ENCODE measurements at regions of chr5 and their contacts with region 1.

Region 1: GRCh38 chr5:57221049-57221568 is 47.2 kb downstream of the GPBP1 start:
- DNase-seq: peak; percentile 46 to 65 (median 52)
- H3K4me3 ChIP-seq: no peak overlapping the region
- H3K4me3 Mint-ChIP-seq: no peak overlapping the region
- H3K27ac ChIP-seq: no peak overlapping the region
- H3K27ac Mint-ChIP-seq: no peak overlapping the region
- H3K4me1 ChIP-seq: no peaks in the 10 kb centered on the region
- H3K4me1 Mint-ChIP-seq: peaks cover 1% of the 10 kb centered on the region
- H3K27me3 ChIP-seq: no peaks in the 10 kb centered on the region
- H3K27me3 Mint-ChIP-seq: no peaks in the 10 kb centered on the region
- CTCF ChIP-seq: peak; percentile 95

Region 2: DNA sequence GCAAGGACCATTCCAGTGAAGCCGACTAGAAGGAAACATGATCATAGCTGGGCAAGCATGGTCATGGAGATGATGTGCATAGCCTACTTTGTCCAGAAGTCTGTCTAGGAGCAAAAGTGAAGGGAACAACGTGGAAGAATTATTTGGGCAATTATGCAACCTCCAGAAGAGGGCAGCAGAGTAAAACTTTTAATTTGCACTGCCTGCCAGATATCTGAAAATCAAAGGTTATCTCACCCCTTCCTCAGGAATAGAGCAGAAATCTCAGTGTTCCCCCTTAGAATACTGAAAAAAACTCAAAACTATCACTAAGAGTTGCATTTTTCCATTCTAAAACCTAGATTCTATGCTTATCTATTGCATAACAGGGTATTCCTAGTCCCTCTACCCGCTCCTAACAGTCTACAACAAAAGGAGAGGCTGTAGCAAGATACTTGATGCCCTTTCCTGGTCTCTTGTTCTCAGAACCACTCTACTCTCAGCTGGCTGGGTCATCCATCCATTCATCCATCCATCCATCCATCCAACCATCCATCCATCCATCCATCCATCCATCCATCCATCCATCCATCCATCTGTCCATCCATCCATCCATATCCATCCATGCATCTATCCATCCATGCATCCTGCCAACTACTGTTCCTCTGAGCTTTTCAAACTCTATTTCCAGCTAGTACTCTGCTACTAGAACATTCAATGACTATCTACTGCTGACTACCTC is 320.1 kb before region 1 on chr5:
- intact Hi-C with region 1: loop called (anchors 5 kb)
- DNase-seq: peak; percentile 35 to 58 (median 44)
- H3K4me3 ChIP-seq: no peak overlapping the region
- H3K4me3 Mint-ChIP-seq: no peak overlapping the region
- H3K27ac ChIP-seq: no peak overlapping the region
- H3K27ac Mint-ChIP-seq: no peak overlapping the region
- H3K4me1 ChIP-seq: peaks cover 0 to 5% of the 10 kb centered on the region in 2 donors
- H3K4me1 Mint-ChIP-seq: peaks cover 4% of the 10 kb centered on the region
- H3K27me3 ChIP-seq: no peaks in the 10 kb centered on the region
- H3K27me3 Mint-ChIP-seq: no peaks in the 10 kb centered on the region
- CTCF ChIP-seq: peak; percentile 87

Region 3: GRCh38 chr5:57137401-57137800 is 83.7 kb before region 1 on chr5:
- intact Hi-C with region 1: loop called in 1 of 2 experiments (anchors 5 kb)
- DNase-seq: no peak
- H3K4me3 ChIP-seq: peak overlapping the region in 1 of 3 experiments; percentile 10
- H3K4me3 Mint-ChIP-seq: no peak overlapping the region
- H3K27ac ChIP-seq: no peak overlapping the region
- H3K27ac Mint-ChIP-seq: no peak overlapping the region
- H3K4me1 ChIP-seq: no peaks in the 10 kb centered on the region
- H3K4me1 Mint-ChIP-seq: no peaks in the 10 kb centered on the region
- H3K27me3 ChIP-seq: no peaks in the 10 kb centered on the region
- H3K27me3 Mint-ChIP-seq: peaks cover 4 to 5% (median 4%) of the 10 kb centered on the region in 3 donors
- CTCF ChIP-seq: no peak